Sigmoid colon (tissue), 7 donors: ENCODE measurements at regions of chr1 and their contacts with region 1.

Region 1: DNA sequence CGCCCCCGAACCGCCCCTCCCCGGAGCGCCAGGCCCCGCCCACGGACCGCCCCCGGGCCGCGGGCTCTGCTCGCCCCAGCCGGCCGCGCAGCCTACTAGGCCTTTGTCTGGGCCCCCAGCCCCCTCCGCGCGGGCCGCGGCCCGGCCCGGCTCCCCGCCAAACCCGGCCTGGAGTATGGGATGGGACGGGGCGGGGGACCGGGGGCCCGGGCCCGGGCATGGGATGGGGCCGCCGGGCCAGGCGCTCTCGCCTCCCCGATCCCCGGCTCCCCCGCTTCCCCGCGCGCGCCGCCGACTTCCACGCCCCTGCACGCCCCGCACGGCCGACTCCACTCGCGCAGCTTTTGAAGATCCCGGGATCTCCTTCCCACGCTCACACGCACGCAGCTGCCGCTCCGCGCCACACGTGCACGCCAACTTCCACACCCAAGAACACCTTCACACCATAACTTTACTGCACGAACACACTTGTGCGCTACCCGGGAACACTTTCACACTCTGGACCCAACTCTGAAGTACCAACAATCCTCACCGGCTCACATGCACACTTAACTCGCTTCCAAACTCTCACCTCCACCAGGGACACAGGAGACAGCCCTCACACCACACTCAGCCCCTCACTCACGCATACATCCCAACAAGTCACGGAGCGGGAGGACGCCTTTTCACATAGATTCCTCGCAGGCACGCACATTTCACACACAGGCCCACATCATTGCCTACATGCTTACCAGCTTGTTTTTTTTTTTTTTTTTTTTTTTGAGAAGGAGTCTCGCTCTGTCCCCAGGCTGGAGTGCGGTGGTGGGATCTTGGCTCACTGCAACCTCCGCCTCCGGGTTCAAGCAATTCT is 487 bp upstream of the HSPG2 start:
- DNase-seq: peak; percentile 94
- H3K4me3 ChIP-seq: peak overlapping the region; percentile 0 to 95 (median 68)
- H3K27ac ChIP-seq: peak overlapping the region; percentile 92 to 99 (median 96)
- H3K4me1 ChIP-seq: peaks cover 0 to 88% (median 83%) of the 10 kb centered on the region in 4 donors
- H3K27me3 ChIP-seq: no peaks in the 10 kb centered on the region
- CTCF ChIP-seq: no peak
- EP300 ChIP-seq: no peak
- POLR2A ChIP-seq: peak in 1 of 2 donors; percentile 72

Region 2: DNA sequence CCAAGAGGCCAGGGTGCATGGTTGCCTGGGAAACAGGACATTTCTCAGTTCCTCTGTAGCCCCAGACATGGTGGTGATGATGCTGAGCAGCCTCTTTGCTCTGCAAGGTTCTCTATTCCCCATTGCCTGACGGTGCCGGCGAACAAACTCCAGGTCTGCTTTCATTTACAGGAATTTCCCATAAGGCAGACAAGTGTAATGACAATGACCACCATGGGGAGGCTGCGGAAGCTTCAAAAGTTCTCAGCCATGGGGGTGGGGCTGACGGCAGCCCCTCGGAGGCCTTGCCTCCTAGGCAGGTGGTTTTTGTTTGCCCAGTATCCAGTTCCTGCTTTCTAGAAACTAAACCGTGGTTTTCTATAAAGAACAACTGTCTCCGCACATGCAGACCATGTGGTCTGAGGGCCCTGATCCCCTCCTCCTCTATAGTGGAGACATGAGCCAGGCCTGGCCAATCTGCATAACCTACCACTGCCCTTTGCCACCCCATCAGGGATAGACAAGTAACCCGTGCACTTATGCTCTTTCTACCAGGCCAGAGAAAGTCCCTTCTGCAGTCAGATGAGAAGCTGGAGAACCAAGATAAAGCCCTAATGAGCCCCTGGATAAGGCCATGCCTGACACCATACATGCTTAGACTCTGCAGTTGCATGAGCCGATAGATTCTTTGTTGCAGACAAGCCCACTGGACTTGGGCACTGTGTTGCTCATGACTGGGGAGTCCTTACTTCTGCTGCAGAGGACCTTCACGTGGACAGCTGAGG is 71.5 kb before region 1 on chr1:
- intact Hi-C with region 1: loop called (anchors 10 kb)
- DNase-seq: no peak
- H3K4me3 ChIP-seq: no peak overlapping the region
- H3K27ac ChIP-seq: peak overlapping the region; percentile 45 to 88 (median 70)
- H3K4me1 ChIP-seq: peaks cover 0 to 55% (median 21%) of the 10 kb centered on the region in 4 donors
- H3K27me3 ChIP-seq: no peaks in the 10 kb centered on the region
- CTCF ChIP-seq: no peak
- EP300 ChIP-seq: no peak
- POLR2A ChIP-seq: no peak

Region 3: DNA sequence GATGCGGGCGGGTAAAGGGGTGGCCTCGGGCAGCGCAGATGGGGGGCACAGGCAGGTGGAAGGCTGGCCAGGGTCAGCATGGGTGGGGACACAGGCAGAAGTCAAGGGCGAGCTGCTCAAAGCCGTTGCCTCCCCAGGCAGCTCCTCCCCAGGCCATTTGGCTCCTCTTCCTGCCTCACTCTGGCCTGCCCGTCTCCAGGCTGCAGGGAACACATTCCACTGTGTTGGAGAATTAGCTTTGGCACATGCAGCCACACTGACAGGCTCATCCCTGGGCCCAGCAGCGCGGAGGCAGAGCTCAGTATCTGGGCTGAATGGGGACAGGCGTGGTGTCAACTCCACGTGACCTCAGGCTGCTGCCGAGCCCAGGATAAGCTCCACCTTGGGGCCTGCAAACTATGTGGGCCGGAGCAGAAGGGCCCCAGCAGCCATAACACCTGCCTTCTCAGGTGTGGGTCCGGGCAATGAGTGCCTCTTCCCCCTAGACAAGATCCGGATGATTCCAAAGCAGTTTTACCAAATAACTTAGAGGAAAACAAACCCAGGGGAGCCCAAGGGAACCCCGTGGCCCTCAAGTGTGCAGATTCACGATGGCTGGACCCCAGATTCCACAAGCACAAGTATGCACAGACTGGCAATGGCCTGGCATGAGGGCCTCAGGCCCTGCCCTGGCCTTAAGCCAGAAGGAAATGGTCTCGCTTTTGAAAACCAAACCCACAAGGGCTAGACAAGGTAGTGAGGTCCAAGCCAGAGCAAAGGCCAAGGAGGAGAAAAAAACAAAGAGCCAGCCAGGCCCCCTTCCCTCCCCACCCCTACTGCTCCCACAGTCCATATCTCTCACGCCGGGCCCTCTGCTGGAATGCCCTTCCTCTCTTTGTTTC is 40.7 kb before region 1 on chr1:
- intact Hi-C with region 1: loop called (anchors 2 kb)
- DNase-seq: peak; percentile 96
- H3K4me3 ChIP-seq: no peak overlapping the region
- H3K27ac ChIP-seq: peak overlapping the region; percentile 90 to 99 (median 98)
- H3K4me1 ChIP-seq: peaks cover 0 to 91% (median 86%) of the 10 kb centered on the region in 4 donors
- H3K27me3 ChIP-seq: no peaks in the 10 kb centered on the region
- CTCF ChIP-seq: no peak
- EP300 ChIP-seq: peak in 1 of 4 donors; percentile 74
- POLR2A ChIP-seq: no peak

Region 4: GRCh38 chr1:21919520-21919919 is 18.1 kb before region 1 on chr1:
- intact Hi-C with region 1: no loop called
- DNase-seq: no peak
- H3K4me3 ChIP-seq: no peak overlapping the region
- H3K27ac ChIP-seq: peak overlapping the region; percentile 90 to 99 (median 98)
- H3K4me1 ChIP-seq: peaks cover 0 to 100% (median 98%) of the 10 kb centered on the region in 4 donors
- H3K27me3 ChIP-seq: no peaks in the 10 kb centered on the region
- CTCF ChIP-seq: no peak
- EP300 ChIP-seq: peak in 3 of 4 donors; percentile 11 to 53 (median 23)
- POLR2A ChIP-seq: no peak